IMR-90 (cell line): ENCODE measurements at regions of chr15 and their contacts with region 1.

Region 1: GRCh38 chr15:28123408-28124023 is 24.4 kb upstream of the OCA2 start:
- DNase-seq: peak; percentile 76
- ATAC-seq: peak; percentile 90
- H3K4me3 ChIP-seq: no peak overlapping the region
- H3K27ac ChIP-seq: no peak overlapping the region
- H3K4me1 ChIP-seq: peaks cover 2% of the 10 kb centered on the region; the same call in 1 of the 2 replicates
- H3K27me3 ChIP-seq: no peaks in the 10 kb centered on the region
- CTCF ChIP-seq: peak; percentile 70
- POLR2A ChIP-seq: no peak
- RAD21 ChIP-seq: peak; percentile 62

Region 2: DNA sequence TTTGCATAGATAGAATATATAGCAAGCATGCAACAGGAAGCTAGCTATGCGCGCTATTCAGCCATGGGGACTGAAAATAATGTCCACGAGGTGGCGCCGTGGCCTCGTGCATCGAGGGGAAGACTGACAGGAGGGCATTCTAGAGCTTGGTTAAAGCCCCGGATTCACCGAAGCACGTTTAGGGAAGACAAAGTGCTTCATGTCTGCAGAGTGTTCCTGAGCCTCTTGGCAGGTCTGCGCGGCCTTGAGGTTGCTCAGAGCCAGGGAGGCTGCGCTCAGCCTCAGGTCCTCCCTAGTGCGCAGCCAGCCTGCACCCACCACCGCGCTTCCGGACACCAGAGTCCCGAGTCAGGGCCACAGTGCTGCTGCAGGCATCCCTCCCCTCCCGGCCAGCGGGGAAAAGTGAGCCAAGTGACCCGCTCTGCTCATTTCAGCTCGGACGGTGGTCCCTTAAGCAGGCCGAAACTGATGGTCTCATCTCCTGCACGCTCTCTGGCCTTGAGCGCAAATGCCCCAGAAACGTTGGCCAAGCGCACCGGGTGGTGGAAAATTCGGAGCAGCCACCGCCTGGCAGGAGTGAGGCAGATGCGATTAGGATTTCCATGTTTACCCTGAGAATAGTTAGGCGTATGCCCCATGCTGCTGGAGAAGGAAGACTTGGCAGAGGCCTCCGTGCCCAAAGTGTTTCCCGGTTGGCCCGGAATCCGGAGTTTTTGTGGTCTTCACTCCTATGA is 1231.9 kb before region 1 on chr15:
- CTCF ChIA-PET with region 1: no interaction called
- POLR2A ChIA-PET with region 1: no interaction called
- dilution Hi-C with region 1: no loop called
- in situ Hi-C with region 1: loop called (anchors 25 kb)
- intact Hi-C with region 1: no loop called
- DNase-seq: peak; percentile 38
- ATAC-seq: peak; percentile 84
- H3K4me3 ChIP-seq: 0 out of 2 replicates have a peak overlapping the region, but pooled peaks have one; percentile 15
- H3K27ac ChIP-seq: no peak overlapping the region
- H3K4me1 ChIP-seq: no peaks in the 10 kb centered on the region
- H3K27me3 ChIP-seq: no peaks in the 10 kb centered on the region
- CTCF ChIP-seq: peak; percentile 61
- POLR2A ChIP-seq: no peak
- RAD21 ChIP-seq: peak; percentile 60

Region 3: DNA sequence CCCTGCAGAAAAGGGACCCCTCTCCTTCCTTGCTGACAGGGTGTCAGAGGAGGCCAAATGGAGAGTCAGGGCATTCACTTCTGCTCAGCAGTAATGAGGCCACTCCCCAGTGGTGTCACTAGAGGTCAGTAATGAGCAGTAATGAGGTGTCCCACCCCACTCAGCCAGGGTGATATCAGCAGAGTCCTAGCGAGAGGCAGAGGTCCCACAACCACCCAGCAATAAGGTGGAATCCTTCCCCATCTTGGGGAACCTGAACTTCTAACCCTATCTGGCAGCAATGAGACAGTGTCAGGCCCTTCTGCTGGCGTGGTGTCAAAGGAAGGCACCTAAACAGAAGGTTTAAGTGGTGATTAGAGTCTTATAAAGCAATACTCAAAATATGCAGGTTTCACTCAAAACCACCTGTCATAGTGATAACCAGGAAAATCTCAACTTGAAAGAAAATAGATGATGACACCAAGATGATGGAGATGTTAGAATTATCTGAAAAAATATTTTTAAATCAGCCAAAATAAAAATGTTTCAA is 37.3 kb before region 1 on chr15:
- CTCF ChIA-PET with region 1: no interaction called
- POLR2A ChIA-PET with region 1: no interaction called
- dilution Hi-C with region 1: no loop called
- in situ Hi-C with region 1: no loop called
- intact Hi-C with region 1: loop called (anchors 1 kb)
- DNase-seq: peak; percentile 46
- ATAC-seq: peak; percentile 100
- H3K4me3 ChIP-seq: no peak overlapping the region
- H3K27ac ChIP-seq: no peak overlapping the region
- H3K4me1 ChIP-seq: no peaks in the 10 kb centered on the region
- H3K27me3 ChIP-seq: peaks cover 2% of the 10 kb centered on the region; the same call in 1 of the 2 replicates
- CTCF ChIP-seq: peak; percentile 66
- POLR2A ChIP-seq: no peak
- RAD21 ChIP-seq: peak; percentile 61